Activated CD8-positive, alpha-beta T cell treated with anti-CD3 and anti-CD28 coated beads, Interleukin-2, amount 10 ng/mL, durations not matched to agents 7 days and 5 days (primary cell): ENCODE measurements at regions of chr6 and their contacts with region 1.

Region 1: DNA sequence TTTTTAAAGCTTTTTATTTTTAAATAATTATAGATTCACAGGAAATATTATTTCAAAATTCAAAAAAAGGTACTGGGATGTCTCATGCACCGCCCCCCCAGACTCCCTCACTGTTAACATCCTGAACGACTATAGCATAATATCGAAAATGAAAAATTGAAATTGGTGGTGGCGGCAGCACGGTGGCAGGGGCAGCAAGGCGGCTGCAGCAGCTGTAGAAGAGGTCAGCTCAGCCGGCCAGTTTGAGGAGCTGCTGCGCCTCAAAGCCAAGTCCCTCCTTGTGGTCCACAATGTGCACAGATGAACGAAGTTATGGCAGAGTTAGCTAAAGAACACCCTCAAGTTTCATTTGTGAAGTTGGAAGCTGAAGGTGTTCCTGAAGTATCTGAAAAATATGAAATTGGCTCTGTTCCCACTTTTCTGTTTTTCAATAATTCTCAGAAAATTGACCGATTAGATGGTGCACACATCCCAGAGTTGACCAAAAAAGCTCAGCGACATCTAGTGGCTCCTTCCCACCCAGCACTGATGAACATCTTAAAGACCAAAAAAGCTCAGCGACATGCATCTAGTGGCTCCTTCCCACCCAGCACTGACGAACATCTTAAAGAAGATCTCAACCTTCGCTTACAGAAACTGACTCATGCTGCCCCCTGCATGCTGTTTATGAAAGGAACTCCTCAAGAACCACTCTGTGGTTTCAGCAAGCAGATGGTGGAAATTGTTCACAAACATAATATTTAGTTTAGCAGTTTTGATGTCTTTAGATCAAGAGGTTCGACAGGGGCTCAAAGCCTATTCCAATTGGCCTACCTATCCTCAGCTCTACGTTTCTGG is 100.8 kb downstream of the FAM217A start:
- DNase-seq: peak; percentile 68
- ATAC-seq: peak; percentile 99
- H3K4me3 Mint-ChIP-seq: no peak overlapping the region
- H3K27ac Mint-ChIP-seq: no peak overlapping the region
- H3K4me1 Mint-ChIP-seq: peaks cover 7% of the 10 kb centered on the region
- H3K27me3 Mint-ChIP-seq: peaks cover 18% of the 10 kb centered on the region

Region 2: DNA sequence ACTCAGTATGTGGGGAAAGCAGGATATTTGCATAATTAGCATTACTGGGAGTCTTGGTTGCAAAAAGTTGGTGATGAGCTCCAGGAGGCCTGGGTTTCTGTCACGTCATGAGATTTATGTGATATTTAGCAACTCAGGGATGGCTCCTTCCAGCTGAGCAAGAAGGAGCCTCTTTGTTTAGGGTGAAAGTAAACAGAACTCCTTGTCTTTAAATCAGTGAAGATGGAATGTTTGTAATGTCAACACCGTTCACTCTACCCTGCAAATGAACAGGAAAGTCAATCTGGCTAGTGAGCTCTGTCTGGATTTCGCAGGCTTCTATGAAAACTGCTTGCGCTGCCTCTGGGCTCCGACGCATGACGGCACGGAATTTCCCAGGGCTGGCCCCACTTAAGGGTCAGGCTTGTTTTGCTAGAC is 313.5 kb before region 1 on chr6:
- CTCF ChIA-PET with region 1: no interaction called
- POLR2A ChIA-PET with region 1: no interaction called
- DNase-seq: no peak
- ATAC-seq: no peak
- H3K4me3 Mint-ChIP-seq: no peak overlapping the region
- H3K27ac Mint-ChIP-seq: no peak overlapping the region
- H3K4me1 Mint-ChIP-seq: no peaks in the 10 kb centered on the region
- H3K27me3 Mint-ChIP-seq: peaks cover 4% of the 10 kb centered on the region

Region 3: GRCh38 chr6:3742426-3743344 is 235.4 kb before region 1 on chr6:
- CTCF ChIA-PET with region 1: interaction called, 66 read pairs
- POLR2A ChIA-PET with region 1: no interaction called
- DNase-seq: peak; percentile 90
- ATAC-seq: peak; percentile 93
- H3K4me3 Mint-ChIP-seq: no peak overlapping the region
- H3K27ac Mint-ChIP-seq: peak overlapping the region; percentile 57
- H3K4me1 Mint-ChIP-seq: peaks cover 13% of the 10 kb centered on the region
- H3K27me3 Mint-ChIP-seq: peaks cover 8% of the 10 kb centered on the region

Region 4: DNA sequence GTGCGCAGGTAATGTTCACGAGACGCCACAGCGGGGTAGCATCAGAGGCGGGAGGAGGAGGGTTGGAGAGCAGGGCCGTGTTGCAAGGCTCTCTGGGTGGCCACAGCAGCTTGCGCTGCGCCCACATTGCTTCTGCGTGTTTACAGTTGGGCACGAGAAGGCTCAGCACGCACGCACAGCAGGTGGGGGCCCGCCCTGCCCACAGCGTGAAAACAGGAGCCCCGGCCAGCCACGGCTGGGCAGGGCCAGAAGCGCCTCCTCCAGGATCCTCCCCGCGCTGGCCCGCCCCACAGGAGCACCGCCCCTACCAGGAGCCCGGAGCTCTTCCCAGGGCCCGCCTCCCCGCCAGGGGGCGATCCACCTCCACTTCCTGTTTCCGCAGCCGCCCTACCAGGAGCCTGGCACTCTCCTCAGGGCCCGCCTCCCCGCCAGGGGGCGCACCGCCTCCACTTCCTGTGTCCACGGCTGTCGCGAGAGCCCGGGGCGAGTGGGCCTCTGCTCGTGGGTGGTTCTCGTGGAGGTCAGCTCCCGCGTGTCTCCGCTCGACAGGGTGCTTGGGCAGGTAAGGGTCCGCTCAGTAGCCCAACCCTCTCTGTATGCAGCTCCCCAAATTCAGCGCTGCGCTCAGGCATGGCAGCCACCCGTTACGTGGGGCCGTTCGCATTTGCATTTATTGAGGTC is 129.0 kb before region 1 on chr6 and contains the start of gene FAM50B:
- CTCF ChIA-PET with region 1: interaction called, 42 read pairs
- POLR2A ChIA-PET with region 1: no interaction called
- DNase-seq: peak; percentile 94
- ATAC-seq: peak; percentile 98
- H3K4me3 Mint-ChIP-seq: peak within 1 kb of the TSS; percentile 71
- H3K27ac Mint-ChIP-seq: peak within 1 kb of the TSS; percentile 78
- H3K4me1 Mint-ChIP-seq: peaks cover 17% of the 10 kb centered on the region
- H3K27me3 Mint-ChIP-seq: no peaks in the 10 kb centered on the region
- total RNA-seq, gene FAM50B: 7.6 to 8.6 TPM

Region 5: GRCh38 chr6:3990692-3991501 is 12.8 kb after region 1 on chr6:
- CTCF ChIA-PET with region 1: interaction called, 55 read pairs
- POLR2A ChIA-PET with region 1: interaction called, 3 read pairs
- DNase-seq: peak; percentile 77
- ATAC-seq: peak; percentile 95
- H3K4me3 Mint-ChIP-seq: no peak overlapping the region
- H3K27ac Mint-ChIP-seq: no peak overlapping the region
- H3K4me1 Mint-ChIP-seq: peaks cover 12% of the 10 kb centered on the region
- H3K27me3 Mint-ChIP-seq: no peaks in the 10 kb centered on the region

Region 6: GRCh38 chr6:4008324-4009047 is 30.4 kb after region 1 on chr6:
- CTCF ChIA-PET with region 1: interaction called, 15 read pairs
- POLR2A ChIA-PET with region 1: no interaction called
- DNase-seq: no peak
- ATAC-seq: peak; percentile 63
- H3K4me3 Mint-ChIP-seq: no peak overlapping the region
- H3K27ac Mint-ChIP-seq: peak overlapping the region; percentile 25
- H3K4me1 Mint-ChIP-seq: peaks cover 46% of the 10 kb centered on the region
- H3K27me3 Mint-ChIP-seq: no peaks in the 10 kb centered on the region